ENCODE measurements at regions of chr13 and their contacts with region 1.

Region 1: DNA sequence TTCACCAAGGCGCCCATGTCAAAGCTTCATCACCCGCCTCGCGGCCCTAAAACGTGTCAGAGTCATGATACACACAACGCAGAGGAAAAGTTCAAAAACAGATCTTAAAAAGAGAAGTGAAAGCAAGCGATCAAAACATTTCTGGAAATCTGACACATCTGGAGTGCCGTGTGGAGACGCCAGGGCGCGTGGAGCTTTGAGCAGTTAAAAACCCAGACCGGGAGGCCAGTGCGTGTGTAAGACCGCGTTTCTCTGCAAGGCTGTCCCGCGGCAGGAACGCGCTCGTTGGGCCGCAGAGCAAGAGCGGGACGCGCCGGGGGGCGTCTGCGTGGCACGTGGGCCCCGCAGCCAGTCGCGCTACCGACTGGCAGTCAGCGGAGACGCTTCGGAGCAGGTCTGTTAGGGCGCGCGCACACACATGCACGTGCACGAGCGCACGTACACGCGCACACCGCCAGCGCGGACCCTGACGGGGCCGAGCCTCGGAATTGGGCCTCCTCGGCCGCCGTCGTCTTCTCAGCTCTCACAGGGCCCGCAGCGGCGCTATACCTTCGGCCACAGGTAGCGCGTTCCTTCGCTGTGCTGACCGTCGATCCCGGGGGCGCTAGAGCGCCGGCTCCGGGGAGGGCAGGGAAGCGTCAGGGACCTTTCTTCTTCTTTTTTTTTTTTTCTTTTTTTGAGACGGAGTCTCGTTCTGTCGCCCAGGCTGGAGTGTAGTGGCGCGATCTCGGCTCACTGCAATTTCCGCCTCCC is 35.8 kb downstream of the RNF6 start:
- DNase-seq: peak; percentile 82 to 87
- H3K4me3 ChIP-seq: peak overlapping the region; percentile 77
- H3K27ac ChIP-seq: no peak overlapping the region
- H3K4me1 ChIP-seq: no peaks in the 10 kb centered on the region
- H3K27me3 ChIP-seq: peaks cover 5% of the 10 kb centered on the region; the same call in 1 of the 2 replicates
- CTCF ChIP-seq: peak; percentile 63

Region 2: DNA sequence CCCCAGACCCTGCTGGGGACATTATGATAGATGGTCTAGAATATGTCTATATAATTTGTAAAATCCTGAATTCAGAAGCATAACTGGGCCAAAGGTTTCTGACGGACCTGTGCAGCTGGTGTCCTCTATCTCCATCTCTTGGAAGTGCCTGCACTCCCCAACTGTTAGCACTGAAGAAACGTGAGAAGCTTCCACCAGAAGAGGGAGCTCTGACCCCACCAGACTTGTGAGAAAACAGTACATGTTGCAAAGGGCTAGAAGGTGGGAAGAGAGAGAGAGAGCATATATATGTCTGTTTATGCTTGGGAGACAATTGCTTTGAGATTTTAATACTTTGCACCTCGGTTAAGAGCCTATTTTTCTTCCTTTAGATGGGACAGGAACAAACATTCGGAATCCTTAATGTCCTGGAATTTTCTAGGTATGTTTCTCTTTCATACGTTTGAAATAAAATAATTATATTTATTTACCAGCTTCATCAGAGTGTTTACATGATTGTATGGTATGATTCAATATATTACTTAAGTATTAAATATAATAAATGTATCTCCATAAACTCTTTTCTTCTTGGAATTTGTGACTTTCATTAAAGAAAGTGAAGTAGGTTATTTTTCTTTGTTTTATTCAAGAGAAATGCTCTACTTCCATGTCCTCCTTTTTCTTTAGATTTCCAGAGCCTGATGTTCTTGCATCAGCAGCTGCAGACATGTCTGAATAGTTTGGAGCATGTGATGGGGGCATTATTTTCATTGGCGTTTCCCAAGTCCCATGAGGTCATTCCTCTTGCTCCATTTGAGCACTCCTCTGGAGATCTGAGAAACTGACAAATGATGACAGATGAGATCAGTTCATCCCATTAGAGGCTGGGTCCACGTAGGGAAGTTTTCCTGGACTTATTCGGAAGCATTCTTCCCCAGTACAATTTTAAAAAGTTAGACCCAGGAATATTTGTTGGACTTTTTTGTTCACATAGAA is 611.6 kb before region 1 on chr13:
- CTCF ChIA-PET with region 1: no interaction called
- POLR2A ChIA-PET with region 1: no interaction called
- intact Hi-C with region 1: loop called (anchors 5 kb)
- DNase-seq: peak; percentile 39 to 47
- H3K4me3 ChIP-seq: no peak overlapping the region
- H3K27ac ChIP-seq: no peak overlapping the region
- H3K4me1 ChIP-seq: no peaks in the 10 kb centered on the region
- H3K27me3 ChIP-seq: peaks cover 63% of the 10 kb centered on the region
- CTCF ChIP-seq: peak; percentile 84

Region 3: GRCh38 chr13:26482451-26483197 is 296.3 kb after region 1 on chr13:
- CTCF ChIA-PET with region 1: no interaction called
- POLR2A ChIA-PET with region 1: no interaction called
- intact Hi-C with region 1: loop called (anchors 5 kb)
- DNase-seq: peak; percentile 43 to 67
- H3K4me3 ChIP-seq: no peak overlapping the region
- H3K27ac ChIP-seq: no peak overlapping the region
- H3K4me1 ChIP-seq: peaks cover 14% of the 10 kb centered on the region
- H3K27me3 ChIP-seq: no peaks in the 10 kb centered on the region
- CTCF ChIP-seq: peak; percentile 87

Region 4: GRCh38 chr13:26557393-26558023 is 371.2 kb after region 1 on chr13 and contains the start of gene WASF3:
- CTCF ChIA-PET with region 1: no interaction called
- POLR2A ChIA-PET with region 1: no interaction called
- intact Hi-C with region 1: loop called (anchors 2 kb)
- DNase-seq: peak; percentile 64 to 67
- H3K4me3 ChIP-seq: peak within 1 kb of the TSS; percentile 49; the same call in 1 of the 2 replicates
- H3K27ac ChIP-seq: no peak within 1 kb of the TSS
- H3K4me1 ChIP-seq: no peaks in the 10 kb centered on the region
- H3K27me3 ChIP-seq: peaks cover 62% of the 10 kb centered on the region
- CTCF ChIP-seq: no peak
- total RNA-seq, gene WASF3: 0.20 and 0.31 TPM in 2 replicates

Region 5: DNA sequence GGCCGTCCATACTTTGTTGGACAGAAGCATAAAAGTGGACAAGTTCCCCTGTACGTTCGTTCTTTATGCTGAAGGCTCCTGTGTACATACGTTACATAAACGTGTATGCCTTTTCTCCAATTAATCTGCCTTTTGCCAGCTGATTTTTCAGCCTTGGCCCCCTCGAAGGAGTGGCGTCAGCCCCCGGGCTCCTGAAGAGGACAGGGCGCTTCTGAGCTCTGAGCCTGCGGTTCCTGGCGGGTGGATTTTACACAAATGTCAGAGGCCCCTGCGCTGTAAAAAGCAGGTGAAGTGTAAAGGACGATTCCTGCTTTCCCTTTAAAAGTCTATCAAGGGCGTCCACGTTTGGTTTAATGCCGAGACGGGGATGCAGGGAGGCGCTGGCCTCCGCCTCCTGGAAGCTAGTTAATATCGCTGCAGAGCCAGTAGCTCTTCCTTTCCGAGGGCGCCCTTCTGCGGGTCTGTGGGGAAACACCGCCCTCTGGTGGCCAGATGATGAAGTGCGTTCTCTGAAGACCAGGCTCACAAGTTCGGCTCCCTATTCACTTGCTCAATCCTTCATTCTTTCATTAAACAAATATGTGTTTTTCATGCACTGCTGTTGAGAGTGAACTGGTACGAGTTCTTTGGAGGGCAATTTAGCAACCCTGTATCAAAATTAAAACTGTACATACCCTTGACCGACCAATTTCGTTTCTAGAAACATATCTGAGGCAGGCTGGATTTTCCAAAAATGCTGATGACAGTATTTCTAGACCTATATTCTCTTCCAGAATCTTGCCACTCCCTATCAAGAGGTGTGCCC is 512.3 kb after region 1 on chr13:
- CTCF ChIA-PET with region 1: interaction called, 33 read pairs
- POLR2A ChIA-PET with region 1: no interaction called
- intact Hi-C with region 1: loop called (anchors 1 kb)
- DNase-seq: peak; percentile 65 to 66
- H3K4me3 ChIP-seq: no peak overlapping the region
- H3K27ac ChIP-seq: no peak overlapping the region
- H3K4me1 ChIP-seq: no peaks in the 10 kb centered on the region
- H3K27me3 ChIP-seq: peaks cover 16% of the 10 kb centered on the region
- CTCF ChIP-seq: peak; percentile 97